PC-3 (cell line): ENCODE measurements at regions of chr7 and their contacts with region 1.

Region 1: DNA sequence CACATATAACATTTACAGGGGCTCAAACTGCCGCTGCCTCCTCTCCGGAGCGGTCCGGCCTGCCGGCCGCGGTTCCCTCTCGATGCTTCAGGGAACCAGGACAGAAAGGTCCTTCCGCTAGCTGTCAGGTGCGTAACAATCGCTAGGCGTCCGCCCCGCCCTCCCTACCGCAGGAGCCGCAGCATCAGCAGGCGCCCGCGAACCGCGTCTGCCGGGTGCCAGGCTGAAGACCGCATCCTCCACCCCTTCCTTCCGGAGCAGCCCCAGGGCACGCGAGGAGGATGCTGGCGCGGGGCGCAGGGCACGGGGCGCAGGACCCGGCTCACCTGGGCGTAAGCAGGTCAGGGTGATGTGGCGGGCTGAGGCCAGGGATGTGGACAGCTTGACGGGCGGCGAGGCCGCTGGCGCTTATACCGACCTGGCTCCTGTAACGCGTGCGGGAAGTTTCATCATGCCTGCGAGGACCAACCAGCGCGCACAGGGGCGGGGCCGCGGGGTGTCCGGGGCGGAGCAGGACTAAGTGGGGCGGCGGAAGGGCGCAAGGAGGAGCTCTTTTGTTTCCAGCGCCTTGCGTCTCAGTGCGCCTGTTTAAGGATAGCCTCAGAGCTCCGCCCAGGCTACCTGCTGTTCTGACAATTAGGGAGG is at the start of gene ASNS:
- DNase-seq: peak; percentile 91
- ATAC-seq: peak; percentile 97
- H3K4me3 ChIP-seq: peak within 1 kb of the TSS; percentile 80
- H3K27ac ChIP-seq: no peak within 1 kb of the TSS
- H3K4me1 ChIP-seq: peaks cover 10% of the 10 kb centered on the region
- H3K27me3 ChIP-seq: no peaks in the 10 kb centered on the region
- CTCF ChIP-seq: no peak
- total RNA-seq, gene ASNS: 14.9 and 19.5 TPM in 2 replicates

Region 2: GRCh38 chr7:97280935-97281334 is 591.2 kb before region 1 on chr7:
- CTCF ChIA-PET with region 1: no interaction called
- POLR2A ChIA-PET with region 1: no interaction called
- intact Hi-C with region 1: no loop called
- DNase-seq: no peak
- ATAC-seq: no peak
- H3K4me3 ChIP-seq: no peak overlapping the region
- H3K27ac ChIP-seq: no peak overlapping the region
- H3K4me1 ChIP-seq: no peaks in the 10 kb centered on the region
- H3K27me3 ChIP-seq: peaks cover 17% of the 10 kb centered on the region; the same call in 1 of the 2 replicates
- CTCF ChIP-seq: no peak

Region 3: DNA sequence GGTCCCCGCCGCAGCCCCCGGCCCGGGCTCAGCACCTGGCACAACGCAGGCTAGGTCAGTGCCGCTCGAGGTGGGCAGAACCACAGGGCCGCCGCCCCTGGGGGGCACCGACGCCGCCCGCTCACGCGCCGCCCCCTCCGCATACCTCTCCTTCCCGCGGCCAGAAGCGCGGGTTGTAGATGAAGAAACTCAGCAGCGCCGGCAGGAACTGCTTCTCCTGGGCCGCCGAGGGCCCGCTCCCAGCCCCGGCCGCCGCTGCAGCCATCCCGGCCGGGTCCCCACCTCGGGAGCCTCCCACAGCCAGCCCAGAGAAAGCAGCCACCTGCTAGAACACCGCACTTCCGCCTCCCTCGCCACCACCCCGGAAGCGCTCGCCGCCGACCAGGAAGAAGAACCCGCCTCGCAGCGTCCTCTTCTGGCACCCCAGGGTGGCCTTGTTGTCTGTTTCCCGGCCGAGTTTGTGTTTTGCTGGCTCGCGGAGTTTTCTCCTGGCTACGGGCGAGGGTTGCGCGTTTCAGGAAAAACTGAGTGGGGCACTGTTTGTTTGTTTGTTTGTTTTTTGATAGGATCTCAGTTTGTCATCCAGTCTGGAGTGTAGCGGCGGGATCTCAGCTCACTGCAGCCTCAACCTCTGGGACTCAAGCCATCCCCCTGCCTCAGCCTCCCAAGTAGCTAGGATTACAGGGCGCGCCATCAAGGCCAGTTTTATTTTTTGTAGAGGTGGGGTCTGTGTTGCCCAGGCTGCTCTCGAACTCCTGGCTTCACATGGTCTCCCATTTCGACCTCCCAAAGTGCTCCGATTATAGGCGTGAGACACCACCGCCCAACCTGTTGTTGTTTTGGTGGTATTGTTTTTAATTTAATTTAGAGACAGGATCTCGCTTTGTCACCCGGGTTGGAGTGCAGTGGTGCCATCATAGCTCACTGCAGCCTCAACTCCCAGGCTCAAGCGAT is 100.1 kb after region 1 on chr7:
- CTCF ChIA-PET with region 1: no interaction called
- POLR2A ChIA-PET with region 1: no interaction called
- intact Hi-C with region 1: loop called (anchors 2 kb)
- DNase-seq: peak; percentile 76
- ATAC-seq: peak; percentile 95
- H3K4me3 ChIP-seq: peak overlapping the region; percentile 99
- H3K27ac ChIP-seq: peak overlapping the region; percentile 52
- H3K4me1 ChIP-seq: peaks cover 11% of the 10 kb centered on the region
- H3K27me3 ChIP-seq: no peaks in the 10 kb centered on the region
- CTCF ChIP-seq: peak; percentile 53; the same call in 1 of the 2 replicates

Region 4: DNA sequence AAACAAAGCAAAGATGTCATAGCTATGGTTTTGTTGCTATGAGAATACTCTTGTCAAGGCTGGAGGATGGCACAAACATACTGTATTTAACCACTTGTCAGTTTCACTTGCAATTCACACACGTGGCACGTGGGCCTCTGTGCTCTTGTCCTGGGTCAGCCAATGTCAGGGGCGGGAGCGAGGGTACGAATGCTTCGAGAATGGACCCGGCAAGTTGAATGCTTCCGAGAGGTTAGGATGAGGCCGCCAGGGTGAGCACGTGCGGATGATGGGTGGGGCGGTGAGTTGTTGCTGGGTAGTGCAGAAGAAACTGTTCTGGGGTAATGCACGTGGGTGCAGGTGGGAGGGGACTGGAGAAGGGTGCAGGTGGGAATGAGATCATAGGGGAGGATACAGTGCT is 128.2 kb after region 1 on chr7:
- CTCF ChIA-PET with region 1: no interaction called
- POLR2A ChIA-PET with region 1: no interaction called
- intact Hi-C with region 1: no loop called
- DNase-seq: no peak
- ATAC-seq: no peak
- H3K4me3 ChIP-seq: no peak overlapping the region
- H3K27ac ChIP-seq: no peak overlapping the region
- H3K4me1 ChIP-seq: no peaks in the 10 kb centered on the region
- H3K27me3 ChIP-seq: peaks cover 18% of the 10 kb centered on the region; the same call in 1 of the 2 replicates
- CTCF ChIP-seq: no peak